Tibial artery (tissue), 4 donors: ENCODE measurements at regions of chr15 and their contacts with region 1.

Region 1: DNA sequence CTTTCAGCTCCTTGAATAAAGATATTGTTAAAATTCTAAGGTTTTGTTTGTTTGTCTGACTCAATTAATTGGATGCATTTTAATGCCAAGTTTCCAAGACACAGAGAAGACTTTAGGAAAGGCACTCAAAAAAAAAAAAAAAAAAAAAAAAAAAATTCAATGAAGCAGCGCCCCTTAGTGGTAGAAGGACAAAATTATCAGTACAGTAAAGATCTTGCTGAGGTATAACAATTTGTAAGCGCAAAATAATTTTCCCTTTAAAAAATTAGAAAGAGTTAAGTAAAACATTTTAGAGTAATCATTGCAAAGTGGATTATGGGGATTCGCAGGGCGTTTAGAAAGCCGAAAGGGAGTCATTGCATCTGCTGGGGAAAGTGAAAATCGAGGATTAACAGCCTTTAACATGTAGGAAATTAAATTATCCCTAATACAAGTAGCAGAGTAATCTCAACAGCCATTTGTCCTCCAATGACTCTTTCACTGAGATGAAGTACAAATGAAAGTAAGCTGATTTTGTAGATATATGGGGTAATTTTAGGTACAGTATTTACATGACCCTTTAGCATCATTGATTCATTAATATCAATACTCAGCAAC is 5.8 kb upstream of the DIS3L start:
- DNase-seq: no peak
- H3K4me3 ChIP-seq: no peak overlapping the region
- H3K27ac ChIP-seq: no peak overlapping the region
- H3K4me1 ChIP-seq: peaks cover 0 to 12% (median 7%) of the 10 kb centered on the region in 4 donors
- H3K27me3 ChIP-seq: no peaks in the 10 kb centered on the region
- CTCF ChIP-seq: peak; percentile 36 to 45

Region 2: DNA sequence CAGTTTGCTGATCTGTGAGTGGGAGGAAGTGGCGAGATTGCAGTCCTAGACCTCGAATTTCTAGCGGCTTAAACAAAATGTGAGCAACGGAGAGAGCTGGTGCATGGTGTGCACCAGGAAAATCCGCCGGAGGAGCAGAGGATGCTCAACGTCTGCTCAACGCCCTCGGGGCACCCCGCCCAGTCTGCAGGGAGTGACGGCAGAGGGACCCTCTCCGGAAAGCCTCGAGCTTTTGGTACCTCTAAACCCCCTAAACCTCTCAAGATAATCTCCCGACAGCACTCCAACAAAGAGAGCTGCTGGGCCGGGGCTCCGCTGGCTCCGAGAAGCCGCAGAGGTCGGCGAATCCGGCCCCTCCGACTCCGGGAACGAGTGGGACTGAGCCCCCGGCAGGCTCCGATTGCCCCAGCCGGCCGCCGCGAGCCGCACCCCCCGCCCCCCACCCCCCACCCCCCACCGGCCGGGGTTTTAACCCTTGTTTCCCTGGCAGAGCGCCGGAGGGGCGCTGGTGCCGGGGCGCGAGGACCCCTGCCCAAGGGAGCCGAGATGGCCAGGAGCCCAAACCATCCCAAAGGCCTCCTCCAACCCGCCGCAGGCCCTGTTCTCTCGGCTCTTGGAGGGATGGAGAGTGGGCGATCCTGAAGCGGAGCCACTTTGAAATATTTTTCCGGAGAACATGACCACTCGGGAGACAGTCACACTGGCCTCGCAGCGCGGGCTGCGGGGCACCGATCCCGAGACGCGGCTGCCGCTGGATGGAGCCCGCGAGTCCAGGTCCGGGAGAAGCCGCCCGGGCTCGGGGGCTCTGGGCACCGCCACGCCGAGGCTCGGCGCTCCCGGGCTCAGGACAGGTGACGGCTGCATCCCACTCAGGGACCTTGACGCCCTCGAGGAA is 35.5 kb before region 1 on chr15:
- intact Hi-C with region 1: loop called (anchors 5 kb)
- DNase-seq: peak in 1 of 2 donors; percentile 42
- H3K4me3 ChIP-seq: peak overlapping the region; percentile 50 to 65
- H3K27ac ChIP-seq: no peak overlapping the region
- H3K4me1 ChIP-seq: peaks cover 0 to 33% (median 25%) of the 10 kb centered on the region in 4 donors
- H3K27me3 ChIP-seq: peaks cover 0 to 71% of the 10 kb centered on the region in 2 donors
- CTCF ChIP-seq: peak; percentile 43 to 60

Region 3: GRCh38 chr15:66654739-66655375 is 367.3 kb after region 1 on chr15:
- intact Hi-C with region 1: no loop called
- DNase-seq: no peak
- H3K4me3 ChIP-seq: peak overlapping the region; percentile 33 to 49
- H3K27ac ChIP-seq: peak overlapping the region; percentile 49 to 62
- H3K4me1 ChIP-seq: peaks cover 0 to 22% (median 16%) of the 10 kb centered on the region in 4 donors
- H3K27me3 ChIP-seq: no peaks in the 10 kb centered on the region
- CTCF ChIP-seq: no peak

Region 4: DNA sequence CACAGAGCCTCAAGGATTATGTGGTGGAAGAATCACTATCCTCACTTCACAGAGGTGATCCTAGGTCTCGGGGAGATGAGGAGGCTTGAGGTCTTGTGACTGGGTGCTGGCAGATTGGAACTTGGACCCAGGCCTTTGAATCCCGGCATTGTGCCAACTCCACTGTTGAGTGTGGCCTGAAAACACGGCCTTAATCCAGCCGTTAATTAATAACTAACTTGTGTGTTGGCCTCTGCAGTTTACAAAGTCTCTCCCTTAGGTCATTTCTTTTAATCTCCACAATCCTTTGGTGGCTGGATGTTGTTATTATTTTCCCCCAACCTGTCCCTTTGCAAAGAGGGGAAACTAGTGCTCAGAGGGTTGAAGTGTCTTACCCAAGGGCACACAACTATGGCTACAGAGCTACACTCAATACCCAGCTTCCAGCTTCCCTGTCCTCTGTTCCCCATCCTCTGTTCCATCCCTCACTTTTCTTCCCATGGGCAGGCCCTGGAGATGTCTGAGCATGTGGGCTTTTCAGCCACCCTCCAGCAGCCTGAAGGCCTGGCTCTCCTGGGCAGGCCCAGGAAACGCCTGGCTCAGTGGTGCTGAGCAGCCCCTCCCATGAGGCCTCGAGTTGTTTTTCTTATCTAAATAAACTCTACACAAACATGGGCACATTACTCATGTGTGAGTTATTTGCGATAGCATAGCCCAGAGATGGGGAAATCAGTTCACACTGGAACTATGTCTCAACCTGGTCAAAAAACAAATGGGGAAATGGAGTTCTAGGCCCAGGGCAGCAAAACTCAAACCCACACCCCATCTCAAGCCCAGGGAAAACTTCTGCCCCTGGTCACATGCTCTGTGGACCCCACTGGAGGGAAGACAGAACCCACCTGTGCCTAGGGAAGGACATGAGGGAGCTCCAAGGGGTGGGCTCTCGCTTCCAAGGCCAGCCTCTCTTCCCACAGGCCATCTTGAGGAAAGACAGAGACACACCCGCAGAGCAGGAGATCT is 761.0 kb after region 1 on chr15:
- intact Hi-C with region 1: no loop called
- DNase-seq: peak; percentile 72 to 90
- H3K4me3 ChIP-seq: no peak overlapping the region
- H3K27ac ChIP-seq: peak overlapping the region; percentile 85 to 86
- H3K4me1 ChIP-seq: peaks cover 11 to 67% (median 49%) of the 10 kb centered on the region in 4 donors
- H3K27me3 ChIP-seq: no peaks in the 10 kb centered on the region
- CTCF ChIP-seq: no peak

Region 5: DNA sequence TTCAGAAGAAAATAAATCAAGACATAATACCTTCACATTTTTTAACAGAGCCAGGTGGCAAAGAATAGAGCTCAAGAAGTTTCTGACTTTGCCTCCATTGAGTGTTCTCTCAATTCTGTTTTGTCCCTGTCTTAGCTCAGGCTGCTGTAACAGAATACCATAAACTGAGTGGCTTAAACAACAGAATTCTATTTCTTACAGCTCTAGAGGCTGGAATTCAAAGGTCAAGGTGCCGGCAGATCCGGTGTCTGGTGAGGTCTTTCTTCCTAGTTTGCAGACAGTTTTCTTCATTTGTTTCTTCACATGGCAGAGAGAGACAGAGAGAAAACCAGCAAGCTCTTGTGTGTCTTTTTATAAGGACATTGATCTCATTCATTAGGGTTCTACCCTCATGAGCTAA is 992.7 kb after region 1 on chr15:
- intact Hi-C with region 1: no loop called
- DNase-seq: no peak
- H3K4me3 ChIP-seq: no peak overlapping the region
- H3K27ac ChIP-seq: no peak overlapping the region
- H3K4me1 ChIP-seq: no peaks in the 10 kb centered on the region
- H3K27me3 ChIP-seq: no peaks in the 10 kb centered on the region
- CTCF ChIP-seq: no peak